ENCODE measurements at regions of chr16 and their contacts with region 1.

Region 1: GRCh38 chr16:58582971-58583765 is 46.5 kb downstream of the CNOT1 start:
- DNase-seq: no peak
- H3K4me3 ChIP-seq: no peak overlapping the region
- H3K27ac ChIP-seq: no peak overlapping the region
- H3K4me1 ChIP-seq: peaks cover 26% of the 10 kb centered on the region
- H3K27me3 ChIP-seq: no peaks in the 10 kb centered on the region
- CTCF ChIP-seq: no peak

Region 2: GRCh38 chr16:58533751-58534470 is 49.3 kb before region 1 on chr16:
- intact Hi-C with region 1: loop called (anchors 10 kb)
- DNase-seq: peak; percentile 44
- H3K4me3 ChIP-seq: no peak overlapping the region
- H3K27ac ChIP-seq: peak overlapping the region; percentile 61
- H3K4me1 ChIP-seq: peaks cover 52% of the 10 kb centered on the region
- H3K27me3 ChIP-seq: no peaks in the 10 kb centered on the region
- CTCF ChIP-seq: no peak